ENCODE measurements at regions of chr15 and their contacts with region 1.

Region 1: GRCh38 chr15:78108299-78109084 is 16.1 kb downstream of the SH2D7 start:
- H3K4me3 ChIP-seq: no peak overlapping the region
- H3K27ac ChIP-seq: no peak overlapping the region
- H3K4me1 ChIP-seq: no peaks in the 10 kb centered on the region
- CTCF ChIP-seq: peak; percentile 95

Region 2: GRCh38 chr15:77637851-77638692 is 470.4 kb before region 1 on chr15:
- CTCF ChIA-PET with region 1: no interaction called
- POLR2A ChIA-PET with region 1: no interaction called
- H3K4me3 ChIP-seq: no peak overlapping the region
- H3K27ac ChIP-seq: no peak overlapping the region
- H3K4me1 ChIP-seq: no peaks in the 10 kb centered on the region; the same call in 1 of the 2 replicates
- CTCF ChIP-seq: no peak

Region 3: DNA sequence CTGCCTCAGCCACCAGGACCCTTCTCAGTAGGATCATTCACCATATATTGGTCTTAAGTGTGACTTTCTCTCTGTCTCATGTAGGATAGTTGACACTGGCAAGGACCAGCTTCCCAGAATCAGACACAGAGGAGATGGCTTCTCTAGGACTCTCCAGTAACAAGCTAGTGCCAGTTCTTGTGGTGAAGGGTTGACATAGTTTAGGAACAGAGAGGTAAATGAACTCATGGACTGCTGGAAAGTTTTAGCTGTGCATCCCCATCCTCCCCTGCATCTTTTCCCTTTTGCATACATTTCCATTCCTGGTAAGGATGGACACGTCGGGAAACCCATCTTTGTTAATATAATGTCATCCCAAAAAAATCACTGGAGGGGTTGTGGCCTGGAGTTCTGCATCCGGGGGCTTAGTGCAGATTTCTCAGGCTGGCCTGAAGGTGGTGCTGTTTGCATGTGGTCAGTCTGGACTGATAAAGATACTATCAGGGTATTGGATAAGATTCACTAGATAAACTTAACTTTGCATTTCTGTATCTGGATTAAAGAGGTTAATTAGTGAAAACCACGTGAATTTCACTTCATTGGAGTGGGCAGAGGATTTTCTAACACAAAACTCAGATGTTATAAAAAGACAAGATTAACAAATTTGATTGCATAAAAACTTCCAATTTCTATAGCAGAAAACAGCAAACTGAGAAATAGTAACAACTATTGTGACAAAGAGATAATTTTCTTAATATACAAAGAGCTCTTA is 141.8 kb before region 1 on chr15:
- CTCF ChIA-PET with region 1: interaction called, 183 read pairs
- POLR2A ChIA-PET with region 1: no interaction called
- H3K4me3 ChIP-seq: no peak overlapping the region
- H3K27ac ChIP-seq: no peak overlapping the region
- H3K4me1 ChIP-seq: no peaks in the 10 kb centered on the region
- CTCF ChIP-seq: no peak

Region 4: GRCh38 chr15:78034495-78035191 is 73.8 kb before region 1 on chr15:
- CTCF ChIA-PET with region 1: interaction called, 11 read pairs
- POLR2A ChIA-PET with region 1: no interaction called
- H3K4me3 ChIP-seq: no peak overlapping the region
- H3K27ac ChIP-seq: peak overlapping the region; percentile 1; the same call in 1 of the 2 replicates
- H3K4me1 ChIP-seq: peaks cover 25% of the 10 kb centered on the region
- CTCF ChIP-seq: no peak

Region 5: GRCh38 chr15:78093242-78094020 is 15.1 kb before region 1 on chr15:
- CTCF ChIA-PET with region 1: interaction called, 28 read pairs
- POLR2A ChIA-PET with region 1: no interaction called
- H3K4me3 ChIP-seq: no peak overlapping the region
- H3K27ac ChIP-seq: no peak overlapping the region
- H3K4me1 ChIP-seq: no peaks in the 10 kb centered on the region
- CTCF ChIP-seq: no peak

Region 6: DNA sequence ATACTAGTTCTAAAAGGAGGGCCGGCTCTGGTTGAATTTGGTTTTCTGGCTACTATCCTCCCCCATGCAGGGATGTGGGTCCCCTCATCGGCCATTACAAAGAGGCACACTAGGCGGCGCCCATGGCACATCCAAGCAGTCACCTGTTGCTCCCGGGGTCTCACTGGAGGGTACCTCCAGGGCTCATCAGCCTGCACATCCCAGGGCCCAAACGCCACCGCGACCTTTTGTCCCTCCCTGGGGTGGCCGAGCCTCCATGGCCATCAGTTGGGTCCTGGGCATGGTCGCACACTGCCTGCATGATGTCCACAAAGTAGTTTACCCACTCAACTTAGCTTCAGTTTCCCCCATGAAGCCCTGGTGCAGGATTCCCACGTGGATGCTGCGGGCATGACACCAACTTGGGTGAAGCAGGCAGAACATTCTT is 69.0 kb after region 1 on chr15:
- CTCF ChIA-PET with region 1: interaction called, 24 read pairs
- POLR2A ChIA-PET with region 1: no interaction called
- H3K4me3 ChIP-seq: no peak overlapping the region
- H3K27ac ChIP-seq: no peak overlapping the region
- H3K4me1 ChIP-seq: no peaks in the 10 kb centered on the region
- CTCF ChIP-seq: peak; percentile 71

Region 7: DNA sequence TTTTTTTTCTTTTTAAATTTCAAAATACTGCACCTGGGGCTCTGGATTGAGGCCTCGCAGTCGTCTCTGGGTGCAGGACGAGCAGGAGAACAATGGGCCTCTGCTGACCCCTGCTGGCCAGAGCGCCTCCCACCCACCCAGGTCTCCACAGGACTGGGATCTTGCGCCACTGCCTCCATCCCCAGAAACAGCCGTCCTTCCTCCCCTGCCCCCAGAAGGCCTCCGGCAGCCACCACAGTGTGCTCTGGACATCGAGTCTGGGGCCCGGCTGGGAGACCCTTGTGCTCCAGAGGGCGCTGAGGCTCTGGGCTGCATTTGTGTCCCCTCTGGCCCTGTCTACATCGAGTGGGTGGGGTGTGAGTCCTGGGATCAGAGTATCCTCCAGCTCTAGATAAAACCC is 132.5 kb after region 1 on chr15:
- CTCF ChIA-PET with region 1: interaction called, 206 read pairs
- POLR2A ChIA-PET with region 1: no interaction called
- H3K4me3 ChIP-seq: no peak overlapping the region
- H3K27ac ChIP-seq: no peak overlapping the region
- H3K4me1 ChIP-seq: no peaks in the 10 kb centered on the region
- CTCF ChIP-seq: peak; percentile 86

Region 8: GRCh38 chr15:78453447-78453846 is 345.0 kb after region 1 on chr15:
- CTCF ChIA-PET with region 1: no interaction called
- POLR2A ChIA-PET with region 1: no interaction called
- H3K4me3 ChIP-seq: no peak overlapping the region
- H3K27ac ChIP-seq: no peak overlapping the region
- H3K4me1 ChIP-seq: peaks cover 67% of the 10 kb centered on the region
- CTCF ChIP-seq: no peak